Activated CD4-positive, alpha-beta T cell treated with anti-CD3 and anti-CD28 coated beads for 36 hours (primary cell): ENCODE measurements at regions of chr19 and their contacts with region 1.

Region 1: GRCh38 chr19:9785367-9786331 is 17.1 kb upstream of the ZNF846 start:
- DNase-seq: peak; percentile 100
- ATAC-seq: peak; percentile 89
- H3K4me3 Mint-ChIP-seq: peak overlapping the region; percentile 84
- H3K27ac Mint-ChIP-seq: peak overlapping the region; percentile 98
- H3K4me1 Mint-ChIP-seq: peaks cover 26% of the 10 kb centered on the region
- H3K27me3 Mint-ChIP-seq: no peaks in the 10 kb centered on the region

Region 2: DNA sequence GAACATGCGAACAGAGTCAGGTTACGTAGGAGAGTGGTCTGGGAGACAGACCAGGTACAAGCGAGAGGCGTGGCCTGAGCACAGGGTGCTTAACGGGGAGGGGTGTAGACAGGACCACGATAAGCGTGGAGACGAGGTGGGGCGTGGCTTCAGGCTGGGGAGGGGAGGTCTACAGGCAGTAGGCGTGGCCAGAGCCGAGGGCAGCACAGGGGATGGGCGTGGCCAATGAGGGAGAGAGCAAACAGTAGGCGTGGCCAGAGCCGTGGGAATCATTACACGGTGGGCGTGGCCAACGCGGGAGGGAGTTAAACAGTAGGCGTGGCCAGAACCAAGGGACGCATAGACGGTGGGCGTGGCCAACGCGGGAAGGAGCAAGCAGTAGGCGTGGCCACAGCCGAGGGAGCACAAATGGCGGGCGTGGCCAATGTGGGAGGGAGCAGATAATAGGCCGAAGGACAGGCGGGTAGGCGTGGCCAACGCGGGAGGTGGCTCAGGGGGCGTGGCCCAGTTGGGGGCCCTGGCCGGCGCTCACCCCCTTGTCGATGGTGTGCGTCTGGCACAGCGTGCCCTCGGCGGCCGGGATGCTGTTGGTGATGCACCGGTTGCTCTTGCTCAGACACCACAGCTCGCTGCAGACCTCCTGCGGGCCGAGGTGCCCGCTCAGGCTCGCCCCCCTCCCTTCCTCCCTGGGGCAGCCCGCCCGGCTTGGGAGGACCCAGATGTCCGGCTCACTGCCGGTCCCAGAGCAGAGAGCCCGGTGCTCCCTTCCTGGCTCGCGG is 1193.2 kb before region 1 on chr19:
- CTCF ChIA-PET with region 1: no interaction called
- POLR2A ChIA-PET with region 1: no interaction called
- intact Hi-C with region 1: loop called in 1 of 2 experiments (anchors 2 kb)
- DNase-seq: peak; percentile 99
- ATAC-seq: peak; percentile 94
- H3K4me3 Mint-ChIP-seq: peak overlapping the region; percentile 70
- H3K27ac Mint-ChIP-seq: no peak overlapping the region
- H3K4me1 Mint-ChIP-seq: peaks cover 15% of the 10 kb centered on the region
- H3K27me3 Mint-ChIP-seq: no peaks in the 10 kb centered on the region

Region 3: DNA sequence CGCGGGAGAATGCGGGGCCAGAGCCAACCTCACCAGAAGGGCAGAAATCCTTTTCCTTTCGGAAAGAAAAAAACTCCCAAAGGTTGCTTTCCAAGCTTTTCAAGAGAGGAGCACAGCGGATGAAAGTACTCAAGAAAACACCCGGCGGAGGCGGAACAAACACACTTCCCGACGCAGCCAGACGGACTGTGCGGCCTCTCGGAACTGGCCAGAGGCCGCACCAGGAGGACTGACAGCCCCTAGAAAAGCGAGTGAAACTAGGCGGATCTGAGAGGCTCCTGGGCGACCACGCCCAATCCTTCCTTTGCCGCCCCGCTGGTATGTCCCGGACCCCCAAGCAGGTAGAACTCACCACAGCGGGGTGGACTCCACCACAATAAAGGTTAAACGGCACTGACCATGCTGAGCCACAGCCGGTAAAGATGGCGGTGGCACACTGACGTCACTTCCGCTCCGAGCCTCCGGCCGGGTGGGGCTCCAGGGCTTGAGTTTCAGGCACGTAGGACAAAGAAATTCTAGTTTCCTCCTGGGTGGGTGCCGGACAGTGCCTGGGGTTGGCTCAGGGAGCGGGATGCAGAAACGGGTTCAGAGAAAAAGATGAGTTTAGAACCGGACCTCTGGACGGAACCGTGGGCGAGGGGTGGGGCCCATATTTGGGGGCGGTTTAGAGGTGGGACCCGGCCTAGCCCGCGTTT is 110.8 kb before region 1 on chr19 and contains the start of gene ZNF562:
- CTCF ChIA-PET with region 1: no interaction called
- POLR2A ChIA-PET with region 1: no interaction called
- intact Hi-C with region 1: loop called (anchors 1 to 2 kb)
- DNase-seq: peak; percentile 91
- ATAC-seq: peak; percentile 78
- H3K4me3 Mint-ChIP-seq: peak within 1 kb of the TSS; percentile 94
- H3K27ac Mint-ChIP-seq: peak within 1 kb of the TSS; percentile 97
- H3K4me1 Mint-ChIP-seq: peaks cover 30% of the 10 kb centered on the region
- H3K27me3 Mint-ChIP-seq: no peaks in the 10 kb centered on the region
- total RNA-seq, gene ZNF562: 29.9 to 39.7 TPM

Region 4: GRCh38 chr19:9818734-9819589 is 33.3 kb after region 1 on chr19 and contains the start of gene FBXL12:
- CTCF ChIA-PET with region 1: no interaction called
- POLR2A ChIA-PET with region 1: no interaction called
- intact Hi-C with region 1: loop called (anchors 1 kb)
- DNase-seq: peak; percentile 100
- ATAC-seq: peak; percentile 92
- H3K4me3 Mint-ChIP-seq: peak within 1 kb of the TSS; percentile 88
- H3K27ac Mint-ChIP-seq: peak within 1 kb of the TSS; percentile 90
- H3K4me1 Mint-ChIP-seq: peaks cover 26% of the 10 kb centered on the region
- H3K27me3 Mint-ChIP-seq: no peaks in the 10 kb centered on the region
- total RNA-seq, gene FBXL12: 19.9 to 22.5 TPM

Region 5: GRCh38 chr19:9827289-9828238 is 41.9 kb after region 1 on chr19 and contains the start of gene UBL5:
- CTCF ChIA-PET with region 1: no interaction called
- POLR2A ChIA-PET with region 1: no interaction called
- intact Hi-C with region 1: loop called in 1 of 2 experiments (anchors 2 kb)
- DNase-seq: peak; percentile 93
- ATAC-seq: peak; percentile 99
- H3K4me3 Mint-ChIP-seq: peak within 1 kb of the TSS; percentile 98
- H3K27ac Mint-ChIP-seq: peak within 1 kb of the TSS; percentile 97
- H3K4me1 Mint-ChIP-seq: peaks cover 23% of the 10 kb centered on the region
- H3K27me3 Mint-ChIP-seq: no peaks in the 10 kb centered on the region
- total RNA-seq, gene UBL5: 214 to 327 TPM

Region 6: GRCh38 chr19:9834726-9835506 is 49.3 kb after region 1 on chr19 and contains the start of gene PIN1:
- CTCF ChIA-PET with region 1: no interaction called
- POLR2A ChIA-PET with region 1: no interaction called
- intact Hi-C with region 1: loop called (anchors 1 to 2 kb)
- DNase-seq: peak; percentile 100
- ATAC-seq: peak; percentile 99
- H3K4me3 Mint-ChIP-seq: peak within 1 kb of the TSS; percentile 86
- H3K27ac Mint-ChIP-seq: peak within 1 kb of the TSS; percentile 88
- H3K4me1 Mint-ChIP-seq: peaks cover 20% of the 10 kb centered on the region
- H3K27me3 Mint-ChIP-seq: no peaks in the 10 kb centered on the region
- total RNA-seq, gene PIN1: 70.4 to 74.2 TPM

Region 7: GRCh38 chr19:9891609-9892373 is 106.1 kb after region 1 on chr19:
- CTCF ChIA-PET with region 1: no interaction called
- POLR2A ChIA-PET with region 1: no interaction called
- intact Hi-C with region 1: no loop called
- DNase-seq: no peak
- ATAC-seq: no peak
- H3K4me3 Mint-ChIP-seq: no peak overlapping the region
- H3K27ac Mint-ChIP-seq: no peak overlapping the region
- H3K4me1 Mint-ChIP-seq: no peaks in the 10 kb centered on the region
- H3K27me3 Mint-ChIP-seq: no peaks in the 10 kb centered on the region

Region 8: DNA sequence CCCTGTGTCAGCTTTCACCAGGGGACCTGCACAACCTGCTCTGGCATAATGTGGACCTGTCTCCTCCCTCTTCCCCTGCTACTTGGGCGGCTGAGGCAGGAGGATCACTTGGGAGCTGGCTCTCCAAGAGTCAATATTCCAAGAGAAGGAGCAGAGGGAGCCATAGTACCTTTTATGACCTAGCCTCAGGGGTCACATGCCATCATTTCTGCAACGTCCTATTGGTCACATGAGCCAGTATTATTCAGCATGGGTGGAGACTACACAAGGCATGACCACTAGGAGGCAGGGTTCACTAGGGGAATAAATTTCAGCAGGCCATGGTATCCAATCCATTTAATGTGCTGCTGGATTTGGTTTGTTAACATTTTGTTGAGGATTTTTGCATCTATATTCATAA is 288.5 kb after region 1 on chr19:
- CTCF ChIA-PET with region 1: no interaction called
- POLR2A ChIA-PET with region 1: no interaction called
- intact Hi-C with region 1: no loop called
- DNase-seq: peak; percentile 70
- ATAC-seq: peak; percentile 90
- H3K4me3 Mint-ChIP-seq: no peak overlapping the region
- H3K27ac Mint-ChIP-seq: no peak overlapping the region
- H3K4me1 Mint-ChIP-seq: no peaks in the 10 kb centered on the region
- H3K27me3 Mint-ChIP-seq: peaks cover 1% of the 10 kb centered on the region